HepG2 (cell line): ENCODE measurements at regions of chr1 and their contacts with region 1.

Region 1: GRCh38 chr1:212791676-212792395 is at the starts of genes NSL1 and TATDN3:
- DNase-seq: peak; percentile 93
- ATAC-seq: peak; percentile 99
- H3K4me3 ChIP-seq: peak within 1 kb of the TSS; percentile 88 to 92 (median 88)
- H3K27ac ChIP-seq: peak within 1 kb of the TSS; percentile 100
- H3K4me1 ChIP-seq: peaks cover 66% of the 10 kb centered on the region
- H3K27me3 ChIP-seq: no peaks in the 10 kb centered on the region; a peak in 1 of 5 replicates
- CTCF ChIP-seq: peak; percentile 53
- EP300 ChIP-seq: peak in 1 of 2 experiments; percentile 66; a peak in 1 of 4 replicates
- POLR2A ChIP-seq: peak; percentile 84 to 95
- RAD21 ChIP-seq: peak; percentile 72
- total RNA-seq, gene NSL1: 77.4 and 119 TPM in 2 replicates
- total RNA-seq, gene TATDN3: 8.6 and 10.7 TPM in 2 replicates

Region 2: GRCh38 chr1:212630158-212630900 is 161.5 kb before region 1 on chr1:
- CTCF ChIA-PET with region 1: no interaction called
- POLR2A ChIA-PET with region 1: no interaction called
- in situ Hi-C with region 1: no loop called
- intact Hi-C with region 1: no loop called
- DNase-seq: peak; percentile 48
- ATAC-seq: peak; percentile 93
- H3K4me3 ChIP-seq: no peak overlapping the region
- H3K27ac ChIP-seq: no peak overlapping the region
- H3K4me1 ChIP-seq: peaks cover 28% of the 10 kb centered on the region
- H3K27me3 ChIP-seq: peaks cover under 1 to 27% of the 10 kb centered on the region in 2 experiments; a peak in 3 of 5 replicates
- CTCF ChIP-seq: peak; percentile 76
- EP300 ChIP-seq: no peak
- POLR2A ChIP-seq: no peak
- RAD21 ChIP-seq: peak; percentile 58

Region 3: DNA sequence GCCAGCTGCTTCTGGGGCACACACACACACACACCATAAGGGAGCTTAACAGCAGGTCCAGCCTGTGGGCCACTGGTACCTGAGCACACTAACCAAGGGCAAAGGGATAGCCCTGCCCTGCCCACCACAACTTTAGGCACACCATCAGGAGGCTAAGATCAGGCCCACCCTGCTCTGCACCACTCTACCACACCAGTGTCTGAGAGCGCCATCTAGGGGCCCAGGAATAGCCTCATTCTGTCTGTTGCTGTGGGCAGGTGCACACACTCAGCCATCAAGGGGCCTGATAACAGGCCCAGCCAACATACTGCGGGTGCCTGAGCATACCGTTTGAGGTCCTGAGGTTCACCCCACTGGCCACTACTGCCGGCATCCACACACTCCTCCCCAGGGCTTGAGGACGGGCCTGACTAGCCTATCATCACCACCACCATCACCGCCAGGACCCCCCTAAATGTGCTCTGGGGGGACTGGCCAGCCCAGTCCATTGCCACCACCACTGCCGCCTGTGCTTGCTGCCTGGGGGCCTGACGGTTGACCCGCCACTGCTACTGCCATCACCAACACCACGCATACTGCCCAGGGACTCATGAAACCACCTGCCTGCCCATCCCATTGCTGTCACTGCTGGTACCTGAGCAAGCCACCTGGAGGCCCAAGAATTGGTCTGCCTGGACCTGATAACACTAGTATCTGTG is 31.6 kb before region 1 on chr1:
- CTCF ChIA-PET with region 1: no interaction called
- POLR2A ChIA-PET with region 1: no interaction called
- in situ Hi-C with region 1: no loop called
- intact Hi-C with region 1: no loop called
- DNase-seq: peak; percentile 22
- ATAC-seq: peak; percentile 96
- H3K4me3 ChIP-seq: no peak overlapping the region
- H3K27ac ChIP-seq: no peak overlapping the region
- H3K4me1 ChIP-seq: 0 out of 2 replicates have a peak, but pooled peaks cover 6% of the 10 kb centered on the region
- H3K27me3 ChIP-seq: no peaks in the 10 kb centered on the region
- CTCF ChIP-seq: peak; percentile 70
- EP300 ChIP-seq: no peak
- POLR2A ChIP-seq: no peak
- RAD21 ChIP-seq: no peak

Region 4: GRCh38 chr1:212814537-212815334 is 22.9 kb after region 1 on chr1:
- CTCF ChIA-PET with region 1: no interaction called
- POLR2A ChIA-PET with region 1: interaction called, 24 read pairs
- in situ Hi-C with region 1: no loop called
- intact Hi-C with region 1: loop called (anchors 1 kb)
- DNase-seq: peak; percentile 25
- ATAC-seq: no peak
- H3K4me3 ChIP-seq: no peak overlapping the region
- H3K27ac ChIP-seq: no peak overlapping the region
- H3K4me1 ChIP-seq: peaks cover 41% of the 10 kb centered on the region
- H3K27me3 ChIP-seq: no peaks in the 10 kb centered on the region
- CTCF ChIP-seq: peak; percentile 44
- EP300 ChIP-seq: no peak
- POLR2A ChIP-seq: no peak
- RAD21 ChIP-seq: no peak

Region 5: GRCh38 chr1:212827824-212828278 is 36.0 kb after region 1 on chr1:
- CTCF ChIA-PET with region 1: no interaction called
- POLR2A ChIA-PET with region 1: interaction called, 49 read pairs
- in situ Hi-C with region 1: no loop called
- intact Hi-C with region 1: no loop called
- DNase-seq: peak; percentile 90
- ATAC-seq: peak; percentile 92
- H3K4me3 ChIP-seq: peak overlapping the region; percentile 32 to 64 (median 36); a peak in 5 of 6 replicates
- H3K27ac ChIP-seq: peak overlapping the region; percentile 98
- H3K4me1 ChIP-seq: peaks cover 48% of the 10 kb centered on the region
- H3K27me3 ChIP-seq: no peaks in the 10 kb centered on the region
- CTCF ChIP-seq: no peak
- EP300 ChIP-seq: peak in 1 of 2 experiments; percentile 86; a peak in 2 of 4 replicates
- POLR2A ChIP-seq: 0 out of 4 replicates have a peak, but pooled peaks of 1 of the 2 experiments have one; percentile 7
- RAD21 ChIP-seq: no peak

Region 6: DNA sequence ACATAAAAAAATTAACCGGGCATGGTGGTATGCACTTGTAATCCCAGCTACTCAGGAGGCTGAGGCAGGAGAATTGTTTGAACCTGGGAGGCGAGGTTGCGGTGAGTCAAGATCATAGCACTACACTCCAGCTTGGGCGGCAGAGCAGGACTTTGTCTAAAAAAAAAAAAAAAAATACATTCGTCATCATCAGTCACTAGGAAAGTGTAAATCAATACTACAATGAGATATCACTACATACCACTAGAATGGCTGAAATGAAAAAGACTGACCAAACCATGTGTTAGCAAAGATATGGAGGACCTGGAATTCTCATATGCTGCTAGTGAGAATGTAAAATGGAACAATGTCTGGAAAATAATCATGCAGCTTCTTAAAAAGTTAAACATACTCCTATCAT is 46.3 kb after region 1 on chr1:
- CTCF ChIA-PET with region 1: no interaction called
- POLR2A ChIA-PET with region 1: interaction called, 11 read pairs
- in situ Hi-C with region 1: no loop called
- intact Hi-C with region 1: no loop called
- DNase-seq: no peak
- ATAC-seq: no peak
- H3K4me3 ChIP-seq: no peak overlapping the region
- H3K27ac ChIP-seq: no peak overlapping the region
- H3K4me1 ChIP-seq: peaks cover 17% of the 10 kb centered on the region
- H3K27me3 ChIP-seq: no peaks in the 10 kb centered on the region
- CTCF ChIP-seq: no peak
- EP300 ChIP-seq: no peak
- POLR2A ChIP-seq: no peak
- RAD21 ChIP-seq: no peak

Region 7: GRCh38 chr1:212990276-212990675 is 198.4 kb after region 1 on chr1:
- CTCF ChIA-PET with region 1: no interaction called
- POLR2A ChIA-PET with region 1: no interaction called
- in situ Hi-C with region 1: no loop called
- intact Hi-C with region 1: loop called (anchors 5 kb)
- DNase-seq: no peak
- ATAC-seq: no peak
- H3K4me3 ChIP-seq: no peak overlapping the region
- H3K27ac ChIP-seq: no peak overlapping the region
- H3K4me1 ChIP-seq: peaks cover 7% of the 10 kb centered on the region; the same call in 1 of the 2 replicates
- H3K27me3 ChIP-seq: no peaks in the 10 kb centered on the region
- CTCF ChIP-seq: no peak
- EP300 ChIP-seq: no peak
- POLR2A ChIP-seq: no peak
- RAD21 ChIP-seq: no peak